HepG2 (cell line): ENCODE measurements at regions of chrX and their contacts with region 1.

Region 1: GRCh38 chrX:47193475-47194193 is at the start of gene UBA1:
- DNase-seq: peak; percentile 90
- ATAC-seq: peak; percentile 72
- H3K4me3 ChIP-seq: peak within 1 kb of the TSS; percentile 68 to 83 (median 74)
- H3K27ac ChIP-seq: peak within 1 kb of the TSS; percentile 79
- H3K4me1 ChIP-seq: peaks cover 56% of the 10 kb centered on the region
- H3K27me3 ChIP-seq: no peaks in the 10 kb centered on the region; a peak in 1 of 5 replicates
- CTCF ChIP-seq: peak; percentile 90
- EP300 ChIP-seq: no peak
- POLR2A ChIP-seq: peak; percentile 68 to 88
- RAD21 ChIP-seq: peak; percentile 78; the same call in 1 of the 2 replicates
- total RNA-seq, gene UBA1: 93.3 and 95.6 TPM in 2 replicates

Region 2: DNA sequence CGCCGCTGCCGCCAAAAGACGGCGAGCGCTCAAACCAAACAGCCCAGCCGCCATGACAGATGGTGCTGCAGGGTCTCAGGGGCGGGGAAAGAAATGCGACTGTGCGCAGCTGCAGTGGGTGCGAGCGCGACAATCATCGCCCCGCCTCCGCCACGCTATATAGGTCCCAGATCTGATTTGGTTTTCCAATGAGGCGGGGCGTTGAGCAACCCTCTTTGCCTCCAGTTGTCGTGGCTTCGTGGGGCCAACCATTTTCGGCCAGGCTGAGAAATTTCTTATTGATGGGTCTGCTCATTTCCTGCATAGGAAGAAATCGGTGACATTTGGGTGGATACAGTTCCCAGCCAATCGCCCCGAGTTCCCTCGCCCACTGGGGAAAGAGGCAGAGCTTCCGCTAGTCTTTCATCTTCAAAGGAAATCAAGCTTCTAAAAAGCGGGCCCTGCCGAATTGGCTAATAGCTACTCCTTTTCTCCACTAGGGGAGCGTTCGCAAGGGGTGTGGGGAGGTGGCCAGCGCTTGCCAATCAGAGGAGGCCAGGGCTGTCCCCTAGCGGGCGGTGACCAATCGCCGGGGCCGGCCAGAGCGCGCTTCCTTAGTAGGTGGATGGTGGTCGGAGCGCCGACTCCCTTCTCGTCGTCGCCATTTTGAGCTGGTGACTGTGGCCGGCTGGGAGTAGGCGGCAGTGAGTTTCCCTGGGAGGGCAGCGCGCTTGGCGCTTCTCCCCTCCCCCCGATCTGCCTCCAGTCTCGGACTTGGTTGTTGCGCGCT is 48.8 kb before region 1 on chrX and contains the starts of genes NDUFB11 and RBM10:
- CTCF ChIA-PET with region 1: no interaction called
- POLR2A ChIA-PET with region 1: interaction called, 16 read pairs
- in situ Hi-C with region 1: no loop called
- intact Hi-C with region 1: no loop called
- DNase-seq: peak; percentile 89
- ATAC-seq: peak; percentile 97
- H3K4me3 ChIP-seq: peak within 1 kb of the TSS; percentile 66 to 83 (median 76)
- H3K27ac ChIP-seq: peak within 1 kb of the TSS; percentile 98
- H3K4me1 ChIP-seq: peaks cover 20% of the 10 kb centered on the region
- H3K27me3 ChIP-seq: no peaks in the 10 kb centered on the region
- CTCF ChIP-seq: peak; percentile 63
- EP300 ChIP-seq: no peak
- POLR2A ChIP-seq: peak; percentile 63 to 88
- RAD21 ChIP-seq: no peak
- total RNA-seq, gene NDUFB11: 94.8 and 100 TPM in 2 replicates
- total RNA-seq, gene RBM10: 41.6 and 43.1 TPM in 2 replicates

Region 3: GRCh38 chrX:47166126-47166525 is 27.5 kb before region 1 on chrX:
- CTCF ChIA-PET with region 1: no interaction called
- POLR2A ChIA-PET with region 1: no interaction called
- in situ Hi-C with region 1: no loop called
- intact Hi-C with region 1: no loop called
- DNase-seq: no peak
- ATAC-seq: no peak
- H3K4me3 ChIP-seq: no peak overlapping the region
- H3K27ac ChIP-seq: no peak overlapping the region
- H3K4me1 ChIP-seq: peaks cover 31% of the 10 kb centered on the region
- H3K27me3 ChIP-seq: no peaks in the 10 kb centered on the region
- CTCF ChIP-seq: no peak
- EP300 ChIP-seq: no peak
- POLR2A ChIP-seq: no peak
- RAD21 ChIP-seq: no peak

Region 4: DNA sequence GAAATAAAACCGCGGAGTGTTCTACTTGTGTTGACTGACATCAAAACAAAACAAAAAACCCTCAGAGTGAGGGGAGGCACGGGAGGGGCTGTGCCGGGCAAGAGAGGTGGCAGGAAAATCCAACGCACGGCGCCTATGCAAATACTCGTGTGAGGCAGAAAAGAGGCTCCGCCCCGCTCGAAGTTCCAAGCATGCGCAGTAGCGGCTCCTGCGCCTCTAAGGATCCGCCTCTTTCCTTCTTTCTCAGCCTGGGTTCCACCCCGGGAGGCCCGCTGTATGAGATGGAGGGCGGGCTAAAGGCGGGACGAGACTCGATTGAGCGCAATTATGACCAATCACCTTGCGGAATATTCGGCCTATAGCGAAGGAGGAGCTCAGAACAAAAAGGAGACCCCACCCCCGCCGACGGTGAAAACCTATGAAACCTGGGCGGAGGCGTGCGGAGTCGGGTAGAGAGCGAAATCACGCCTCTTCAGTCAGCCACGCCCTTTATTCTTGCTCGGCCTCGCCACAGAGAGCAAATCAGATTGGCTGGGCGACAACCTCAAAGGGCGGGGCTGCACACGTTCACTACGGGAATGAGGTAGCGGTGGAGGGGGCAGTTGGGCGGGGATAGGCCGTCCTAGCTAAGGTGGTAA is 24.1 kb after region 1 on chrX:
- CTCF ChIA-PET with region 1: no interaction called
- POLR2A ChIA-PET with region 1: interaction called, 17 read pairs
- in situ Hi-C with region 1: no loop called
- intact Hi-C with region 1: no loop called
- DNase-seq: peak; percentile 94
- ATAC-seq: peak; percentile 86
- H3K4me3 ChIP-seq: peak overlapping the region; percentile 59 to 82 (median 81)
- H3K27ac ChIP-seq: peak overlapping the region; percentile 89
- H3K4me1 ChIP-seq: peaks cover 36% of the 10 kb centered on the region
- H3K27me3 ChIP-seq: no peaks in the 10 kb centered on the region
- CTCF ChIP-seq: no peak
- EP300 ChIP-seq: no peak
- POLR2A ChIP-seq: no peak
- RAD21 ChIP-seq: no peak

Region 5: DNA sequence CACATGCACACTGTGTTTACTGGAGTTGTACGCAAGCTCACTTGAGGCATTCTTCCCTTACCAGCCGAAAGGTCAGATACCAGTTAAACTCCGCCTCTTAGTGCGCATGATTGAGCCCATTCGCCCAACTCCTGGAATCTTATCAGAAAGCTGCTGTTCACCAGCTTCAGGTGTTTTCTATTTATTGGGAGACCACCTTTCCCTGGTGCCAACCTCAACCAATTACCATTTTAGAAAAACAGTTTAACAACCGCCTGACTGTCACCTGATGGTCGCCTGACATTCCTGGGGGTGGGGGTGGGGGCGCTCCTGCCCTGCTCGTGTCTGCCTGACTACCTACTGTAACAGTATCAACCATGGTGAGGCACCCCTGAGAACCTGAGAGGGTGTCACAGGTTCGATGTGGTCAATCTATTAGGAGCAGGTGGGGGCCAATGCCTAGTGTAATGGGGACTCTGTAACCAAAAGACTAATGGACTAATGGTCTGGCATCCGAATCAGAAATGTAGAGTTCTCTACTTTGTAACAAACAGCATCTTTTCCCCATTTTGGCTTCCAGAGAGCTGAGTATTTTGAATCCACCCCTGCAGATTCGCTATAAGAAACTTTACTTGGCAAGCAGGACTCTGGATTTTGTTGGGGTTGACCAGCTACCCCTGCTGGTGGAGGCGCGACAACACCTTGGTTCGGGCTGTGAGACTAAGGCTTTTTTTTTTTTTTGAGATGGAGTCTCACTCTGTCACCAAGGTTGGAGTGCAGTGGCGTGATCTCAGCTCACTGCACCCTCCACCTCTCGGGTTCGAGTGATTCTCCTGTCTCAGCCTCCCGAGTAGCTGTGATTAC is 118.5 kb after region 1 on chrX:
- CTCF ChIA-PET with region 1: interaction called, 5 read pairs
- POLR2A ChIA-PET with region 1: interaction called, 3 read pairs
- in situ Hi-C with region 1: no loop called
- intact Hi-C with region 1: loop called (anchors 2 kb)
- DNase-seq: peak; percentile 45
- ATAC-seq: peak; percentile 80
- H3K4me3 ChIP-seq: peak overlapping the region in 1 of 3 experiments; percentile 23; a peak in 2 of 6 replicates
- H3K27ac ChIP-seq: no peak overlapping the region
- H3K4me1 ChIP-seq: peaks cover 13% of the 10 kb centered on the region; the same call in 1 of the 2 replicates
- H3K27me3 ChIP-seq: no peaks in the 10 kb centered on the region
- CTCF ChIP-seq: peak; percentile 61
- EP300 ChIP-seq: no peak
- POLR2A ChIP-seq: no peak
- RAD21 ChIP-seq: no peak

Region 6: GRCh38 chrX:47384502-47384901 is 190.9 kb after region 1 on chrX:
- CTCF ChIA-PET with region 1: interaction called, 6 read pairs
- POLR2A ChIA-PET with region 1: interaction called, 4 read pairs
- in situ Hi-C with region 1: loop called (anchors 5 kb)
- intact Hi-C with region 1: loop called (anchors 1 kb)
- DNase-seq: peak; percentile 64
- ATAC-seq: peak; percentile 73
- H3K4me3 ChIP-seq: peak overlapping the region in 1 of 3 experiments; percentile 30; a peak in 2 of 6 replicates
- H3K27ac ChIP-seq: no peak overlapping the region
- H3K4me1 ChIP-seq: peaks cover 6% of the 10 kb centered on the region; the same call in 1 of the 2 replicates
- H3K27me3 ChIP-seq: no peaks in the 10 kb centered on the region
- CTCF ChIP-seq: peak; percentile 72
- EP300 ChIP-seq: no peak
- POLR2A ChIP-seq: no peak
- RAD21 ChIP-seq: no peak

Region 7: GRCh38 chrX:47523297-47523696 is 329.7 kb after region 1 on chrX:
- CTCF ChIA-PET with region 1: interaction called, 5 read pairs
- POLR2A ChIA-PET with region 1: interaction called, 3 read pairs
- in situ Hi-C with region 1: loop called (anchors 5 kb)
- intact Hi-C with region 1: no loop called
- DNase-seq: peak; percentile 17
- ATAC-seq: peak; percentile 98
- H3K4me3 ChIP-seq: peak overlapping the region; percentile 34 to 69 (median 51); a peak in 4 of 6 replicates
- H3K27ac ChIP-seq: no peak overlapping the region
- H3K4me1 ChIP-seq: no peaks in the 10 kb centered on the region
- H3K27me3 ChIP-seq: peaks cover 0 to 5% of the 10 kb centered on the region in 2 experiments; a peak in 1 of 5 replicates
- CTCF ChIP-seq: peak; percentile 91
- EP300 ChIP-seq: no peak
- POLR2A ChIP-seq: no peak
- RAD21 ChIP-seq: peak; percentile 90